ENCODE measurements at regions of chr5 and their contacts with region 1.

Region 1: DNA sequence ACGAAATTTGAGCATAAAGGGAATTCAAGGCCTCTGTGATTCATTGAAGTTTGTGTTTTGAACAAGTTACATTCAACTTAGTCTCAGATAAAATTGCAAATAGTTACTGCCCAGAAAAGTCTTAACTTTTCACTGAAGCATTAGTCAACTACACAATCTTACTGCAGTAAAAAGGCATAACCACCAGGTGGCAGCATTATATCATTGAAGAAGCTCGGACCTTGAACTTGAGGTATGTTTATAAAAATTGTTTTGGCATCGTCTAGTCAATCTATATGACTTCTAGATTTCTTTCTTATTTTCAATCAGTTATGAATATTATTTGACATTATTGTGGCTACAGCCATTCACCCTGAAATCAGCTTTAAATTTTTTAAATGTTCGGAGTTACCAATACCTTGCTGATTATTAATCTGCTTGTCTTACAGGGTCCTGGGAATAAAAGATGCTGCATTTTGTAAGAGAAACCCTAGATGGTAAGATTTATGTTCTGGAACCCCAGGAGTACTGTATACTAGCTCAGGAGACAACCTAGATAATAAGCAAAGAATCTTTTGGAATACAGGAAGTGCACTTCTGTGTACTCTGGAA is 83.9 kb upstream of the GRAMD2B start:
- DNase-seq: peak; percentile 56 to 66 (median 58)
- H3K4me3 ChIP-seq: no peak overlapping the region
- H3K4me3 Mint-ChIP-seq: no peak overlapping the region
- H3K27ac ChIP-seq: no peak overlapping the region
- H3K27ac Mint-ChIP-seq: no peak overlapping the region
- H3K4me1 ChIP-seq: no peaks in the 10 kb centered on the region
- H3K4me1 Mint-ChIP-seq: no peaks in the 10 kb centered on the region
- H3K27me3 ChIP-seq: no peaks in the 10 kb centered on the region
- H3K27me3 Mint-ChIP-seq: peaks cover 9 to 21% of the 10 kb centered on the region in 2 donors

Region 2: DNA sequence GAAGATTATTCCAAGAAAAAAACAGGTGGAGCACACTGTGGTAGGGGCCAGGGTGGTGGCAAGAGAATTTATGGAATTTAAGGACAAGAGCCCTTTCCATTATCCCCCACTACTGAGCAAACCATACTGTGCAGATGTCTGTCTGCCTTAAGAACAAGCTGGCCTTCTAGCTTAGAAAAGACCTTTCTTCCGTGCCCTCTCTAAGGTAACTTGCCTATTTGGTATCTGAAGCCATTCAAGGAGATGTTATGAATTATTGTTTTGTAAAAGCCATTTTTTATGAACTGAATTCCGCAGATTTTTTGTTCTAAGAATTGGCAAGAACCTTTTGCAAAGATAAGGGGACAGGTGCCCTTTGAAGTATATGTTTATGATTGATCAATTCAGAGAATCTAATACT is 104.8 kb after region 1 on chr5:
- CTCF ChIA-PET with region 1: no interaction called
- POLR2A ChIA-PET with region 1: no interaction called
- intact Hi-C with region 1: no loop called
- DNase-seq: no peak
- H3K4me3 ChIP-seq: no peak overlapping the region
- H3K4me3 Mint-ChIP-seq: no peak overlapping the region
- H3K27ac ChIP-seq: no peak overlapping the region
- H3K27ac Mint-ChIP-seq: peak overlapping the region in 2 of 7 donors; percentile 8 to 60
- H3K4me1 ChIP-seq: peaks cover 36% of the 10 kb centered on the region
- H3K4me1 Mint-ChIP-seq: peaks cover 30 to 49% (median 36%) of the 10 kb centered on the region in 4 donors
- H3K27me3 ChIP-seq: no peaks in the 10 kb centered on the region
- H3K27me3 Mint-ChIP-seq: no peaks in the 10 kb centered on the region

Region 3: DNA sequence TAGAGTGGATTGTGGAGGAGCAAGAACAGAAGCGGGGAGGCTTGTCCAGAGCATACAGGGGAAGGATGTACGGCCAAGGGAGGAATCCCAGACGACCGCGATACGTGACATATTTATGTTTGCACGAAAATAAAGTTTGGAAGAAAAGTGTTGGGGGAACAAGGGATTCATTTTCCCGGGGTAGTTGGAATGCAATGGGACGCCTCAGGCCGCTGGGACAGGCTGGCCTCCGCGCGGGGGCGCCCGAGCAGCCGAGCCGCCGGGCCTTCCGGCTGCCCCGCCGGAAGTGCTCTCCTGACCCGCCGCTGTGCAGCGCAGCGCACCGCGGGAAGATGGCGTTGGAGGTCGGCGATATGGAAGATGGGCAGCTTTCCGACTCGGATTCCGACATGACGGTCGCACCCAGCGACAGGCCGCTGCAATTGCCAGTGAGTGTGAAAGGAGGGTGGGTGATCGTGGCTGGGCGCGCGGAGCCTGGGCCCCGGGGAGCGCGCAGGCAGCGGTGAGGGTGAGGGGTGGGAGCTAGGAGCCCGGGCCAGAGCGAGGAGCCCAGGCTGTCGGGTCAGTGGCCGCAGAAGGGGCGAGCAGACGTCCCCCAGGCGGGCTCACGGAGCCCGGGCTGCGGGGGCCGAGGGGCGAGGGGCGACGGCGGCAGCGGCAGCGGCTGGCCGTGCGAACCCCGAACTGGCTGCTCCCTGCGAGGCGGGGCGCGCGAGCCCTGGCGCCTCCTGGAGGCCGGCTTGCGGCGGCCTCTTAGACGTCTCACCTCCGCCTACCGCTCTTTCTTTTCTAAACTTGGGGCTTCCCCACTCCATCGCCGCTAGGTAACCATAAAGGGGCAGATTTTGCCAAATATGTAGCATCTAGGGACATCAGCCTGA is 261.6 kb after region 1 on chr5 and contains the start of gene PHAX:
- CTCF ChIA-PET with region 1: interaction called, 25 read pairs
- POLR2A ChIA-PET with region 1: interaction called, 4 read pairs
- intact Hi-C with region 1: loop called (anchors 1 kb)
- DNase-seq: peak; percentile 68 to 75 (median 74)
- H3K4me3 ChIP-seq: peak within 1 kb of the TSS; percentile 50 to 95
- H3K4me3 Mint-ChIP-seq: peak within 1 kb of the TSS; percentile 96 to 99 (median 97)
- H3K27ac ChIP-seq: peak within 1 kb of the TSS; percentile 80
- H3K27ac Mint-ChIP-seq: peak within 1 kb of the TSS; percentile 84 to 99 (median 96)
- H3K4me1 ChIP-seq: peaks cover 31% of the 10 kb centered on the region
- H3K4me1 Mint-ChIP-seq: peaks cover 22 to 46% (median 34%) of the 10 kb centered on the region in 4 donors
- H3K27me3 ChIP-seq: no peaks in the 10 kb centered on the region
- H3K27me3 Mint-ChIP-seq: no peaks in the 10 kb centered on the region
- total RNA-seq, gene PHAX: 41.2 to 43.4 TPM